Esophagus muscularis mucosa (tissue), 4 donors: ENCODE measurements at regions of chr16 and their contacts with region 1.

Region 1: DNA sequence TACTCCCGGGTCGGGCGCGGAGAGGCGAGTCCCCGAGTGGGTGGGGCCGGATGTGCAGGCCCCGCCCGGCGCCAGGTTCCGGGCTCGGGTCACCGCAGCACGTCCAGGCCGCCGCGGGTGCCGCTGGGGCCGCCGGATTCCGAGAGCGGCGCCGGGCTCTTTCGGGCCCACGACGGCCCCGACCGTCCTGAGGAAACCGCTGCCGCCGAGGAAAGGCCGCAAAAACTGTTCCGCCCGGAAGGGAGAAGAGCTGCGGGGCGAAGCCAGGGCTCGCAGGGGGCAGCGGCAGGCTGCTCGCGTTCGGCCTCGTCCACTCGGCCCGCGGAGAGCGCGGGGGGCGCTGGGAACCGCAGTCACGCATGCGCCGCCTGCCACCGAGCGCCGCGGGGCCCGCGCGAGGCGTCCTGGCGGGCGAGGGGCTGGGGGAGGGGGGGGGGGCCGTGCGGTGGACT is at the start of gene ZKSCAN2:
- DNase-seq: peak; percentile 95
- H3K4me3 ChIP-seq: peak within 1 kb of the TSS; percentile 73 to 98 (median 82)
- H3K27ac ChIP-seq: peak within 1 kb of the TSS; percentile 94 to 99 (median 98)
- H3K4me1 ChIP-seq: peaks cover 33 to 42% (median 38%) of the 10 kb centered on the region in 4 donors
- H3K27me3 ChIP-seq: no peaks in the 10 kb centered on the region
- CTCF ChIP-seq: no peak
- EP300 ChIP-seq: no peak
- POLR2A ChIP-seq: peak; percentile 88
- total RNA-seq, gene ZKSCAN2: 3.7 to 5.3 (median 4.5) TPM

Region 2: DNA sequence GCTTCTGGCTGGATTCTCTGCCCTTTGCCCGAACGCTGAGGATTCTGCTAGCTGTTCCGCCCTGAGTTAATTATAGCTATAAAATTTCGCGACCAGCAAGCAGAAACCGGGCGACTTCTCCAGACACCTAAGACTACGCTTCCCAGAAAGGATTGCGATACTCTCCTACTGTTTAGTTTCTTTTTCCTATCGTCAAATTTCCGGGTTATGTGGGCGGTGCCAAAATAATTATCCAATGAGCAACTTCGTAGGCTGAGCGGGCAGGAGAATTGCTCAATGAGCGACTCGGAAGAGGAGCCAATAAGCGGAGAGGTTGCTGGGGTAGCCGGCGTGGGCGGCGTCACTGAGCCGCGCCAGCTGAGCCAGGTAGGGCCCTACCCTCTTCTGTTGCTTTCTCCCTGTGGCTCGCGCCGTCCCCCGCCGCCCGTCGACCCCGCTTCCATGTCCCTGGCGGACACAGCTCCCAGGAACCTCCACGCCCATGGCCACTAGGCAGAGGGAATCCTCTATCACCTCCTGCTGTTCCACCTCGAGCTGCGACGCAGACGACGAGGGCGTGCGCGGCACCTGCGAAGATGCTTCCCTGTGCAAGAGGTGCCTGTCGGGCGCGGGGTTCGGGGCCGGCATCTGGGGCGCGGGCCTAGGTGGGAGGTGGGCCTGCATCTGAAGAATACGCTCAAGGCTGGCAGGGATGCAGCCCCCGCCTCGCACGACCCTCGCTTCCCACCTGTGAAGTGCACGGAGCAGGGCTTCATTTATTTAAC is 145.9 kb before region 1 on chr16 and contains the start of gene LCMT1:
- intact Hi-C with region 1: loop called (anchors 10 kb)
- DNase-seq: peak; percentile 98
- H3K4me3 ChIP-seq: peak within 1 kb of the TSS; percentile 83 to 97 (median 91)
- H3K27ac ChIP-seq: peak within 1 kb of the TSS; percentile 84 to 85 (median 84)
- H3K4me1 ChIP-seq: peaks cover 33 to 62% (median 48%) of the 10 kb centered on the region in 4 donors
- H3K27me3 ChIP-seq: no peaks in the 10 kb centered on the region
- CTCF ChIP-seq: no peak
- EP300 ChIP-seq: no peak
- POLR2A ChIP-seq: no peak
- total RNA-seq, gene LCMT1: 10.8 to 24.5 (median 18.0) TPM

Region 3: DNA sequence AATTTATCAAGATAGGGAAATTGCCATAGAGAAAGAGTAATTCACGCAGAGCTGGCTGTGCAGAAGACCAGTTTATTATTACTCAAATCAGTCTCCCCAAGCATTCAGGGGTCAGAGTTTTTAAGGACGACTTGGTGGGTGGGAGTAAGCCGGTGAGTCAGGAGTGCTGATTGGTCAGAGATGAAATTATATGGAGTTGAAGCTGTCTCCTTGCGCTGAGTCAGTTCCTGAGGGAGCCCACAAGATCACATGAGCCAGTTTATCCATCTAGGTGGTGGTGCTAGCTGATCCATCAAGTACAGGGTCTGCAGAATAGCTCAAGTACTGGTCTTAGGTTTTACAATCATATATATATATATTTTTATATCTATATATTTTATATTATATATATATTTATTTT is 46.8 kb before region 1 on chr16:
- intact Hi-C with region 1: no loop called
- DNase-seq: no peak
- H3K4me3 ChIP-seq: no peak overlapping the region
- H3K27ac ChIP-seq: no peak overlapping the region
- H3K4me1 ChIP-seq: no peaks in the 10 kb centered on the region
- H3K27me3 ChIP-seq: no peaks in the 10 kb centered on the region
- CTCF ChIP-seq: no peak
- EP300 ChIP-seq: no peak
- POLR2A ChIP-seq: no peak

Region 4: DNA sequence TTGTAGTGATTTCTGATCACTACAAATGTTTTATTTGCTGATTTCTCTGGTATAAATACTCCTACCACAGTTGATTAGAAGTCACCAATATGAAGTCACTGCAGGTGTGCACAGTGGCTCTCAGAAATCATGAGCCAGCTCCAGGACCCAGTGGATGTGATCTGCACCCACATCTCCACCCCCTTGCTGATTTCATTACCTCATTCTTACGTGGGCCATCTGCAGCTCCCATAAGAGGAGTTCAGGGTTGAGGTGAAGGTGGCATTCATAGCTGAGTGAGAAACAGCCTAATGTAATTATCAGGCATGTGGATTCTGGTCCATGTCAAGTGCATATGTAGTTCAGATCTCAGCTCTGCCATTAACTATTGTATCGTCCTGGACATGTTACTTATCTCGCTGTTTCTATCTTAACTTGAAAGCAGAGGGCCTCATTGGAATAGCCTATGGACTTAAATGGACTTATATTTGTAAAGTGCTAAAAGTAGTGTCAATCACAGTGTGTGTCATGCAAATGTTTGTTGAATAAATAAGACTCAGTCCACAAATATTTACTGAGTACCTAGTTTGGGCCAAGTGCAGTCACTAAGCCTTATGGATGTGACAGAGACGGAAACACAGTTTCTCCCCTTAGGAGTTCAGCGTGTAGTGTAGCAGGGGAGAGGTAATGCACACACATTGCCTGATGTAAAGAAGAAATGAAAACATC is 40.8 kb after region 1 on chr16:
- intact Hi-C with region 1: no loop called
- DNase-seq: no peak
- H3K4me3 ChIP-seq: no peak overlapping the region
- H3K27ac ChIP-seq: no peak overlapping the region
- H3K4me1 ChIP-seq: no peaks in the 10 kb centered on the region
- H3K27me3 ChIP-seq: peaks cover 0 to 3% (median 0%) of the 10 kb centered on the region in 4 donors
- CTCF ChIP-seq: no peak
- EP300 ChIP-seq: no peak
- POLR2A ChIP-seq: no peak

Region 5: GRCh38 chr16:25707982-25708583 is 450.6 kb after region 1 on chr16:
- intact Hi-C with region 1: no loop called
- DNase-seq: no peak
- H3K4me3 ChIP-seq: no peak overlapping the region
- H3K27ac ChIP-seq: no peak overlapping the region
- H3K4me1 ChIP-seq: no peaks in the 10 kb centered on the region
- H3K27me3 ChIP-seq: peaks cover 0 to 20% (median 0%) of the 10 kb centered on the region in 4 donors
- CTCF ChIP-seq: no peak
- EP300 ChIP-seq: no peak
- POLR2A ChIP-seq: no peak